Posterior vena cava (tissue), 2 donors: ENCODE measurements at regions of chr7 and their contacts with region 1.

Region 1: DNA sequence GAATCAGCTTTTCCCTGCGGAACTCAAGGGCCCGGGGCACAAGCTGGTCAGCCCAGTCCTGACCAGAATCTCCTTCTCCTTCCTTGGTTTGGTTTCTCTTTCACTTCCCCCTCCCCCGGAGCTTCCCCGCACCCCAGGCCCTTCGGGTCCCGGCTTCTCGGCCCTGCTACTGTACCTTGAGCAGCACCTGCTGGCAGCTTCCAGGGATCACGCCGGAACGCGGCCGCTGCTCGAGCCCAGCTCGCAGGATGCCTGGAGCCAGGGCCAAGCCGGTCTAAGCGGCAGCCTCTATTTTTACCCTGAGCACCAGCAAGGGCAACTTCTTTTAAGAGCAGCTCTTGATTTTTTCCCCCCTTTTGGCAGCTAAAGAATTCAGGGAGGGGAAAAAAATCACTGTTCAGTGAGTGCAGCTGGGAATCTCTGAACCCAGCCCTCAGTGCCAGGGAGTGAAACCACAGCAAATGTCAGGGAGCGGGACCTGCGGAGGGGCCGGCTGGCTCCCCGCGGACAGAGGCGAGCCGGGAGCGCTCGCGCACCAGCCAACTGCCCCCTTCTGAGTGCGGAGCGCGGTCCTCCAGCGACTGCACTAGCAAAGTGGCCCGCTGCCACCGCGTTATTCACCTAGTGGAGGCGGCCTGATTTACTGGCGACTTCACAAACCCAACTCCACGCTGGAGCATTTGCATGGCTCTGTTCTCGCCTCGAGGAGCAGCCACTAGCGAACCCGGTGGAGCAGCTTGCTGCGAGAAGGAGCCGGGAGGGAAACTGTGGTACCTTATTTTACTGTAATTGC is 2.4 kb upstream of the INHBA start:
- DNase-seq: peak; percentile 96

Region 2: DNA sequence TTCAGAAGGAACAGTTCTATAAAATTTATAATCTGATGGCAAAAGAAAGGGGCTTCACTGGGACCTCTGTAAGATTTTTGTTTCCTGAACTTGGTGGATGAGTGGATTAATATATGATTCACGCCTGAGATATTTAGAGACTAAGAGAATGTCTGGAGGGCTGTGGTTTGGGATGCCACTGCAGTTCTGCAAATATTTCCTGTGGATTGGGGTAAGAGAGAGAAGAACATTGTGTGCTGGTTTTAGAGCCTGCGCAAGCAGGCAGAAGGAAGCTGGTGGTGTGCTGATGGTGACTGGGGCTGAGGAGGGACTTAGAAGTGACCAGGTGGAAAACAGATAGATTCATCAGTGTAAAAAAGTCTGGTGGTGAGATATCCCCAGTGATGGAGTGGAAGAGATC is 1483.5 kb before region 1 on chr7:
- intact Hi-C with region 1: loop called in 1 of 2 experiments (anchors 10 kb)
- DNase-seq: no peak

Region 3: DNA sequence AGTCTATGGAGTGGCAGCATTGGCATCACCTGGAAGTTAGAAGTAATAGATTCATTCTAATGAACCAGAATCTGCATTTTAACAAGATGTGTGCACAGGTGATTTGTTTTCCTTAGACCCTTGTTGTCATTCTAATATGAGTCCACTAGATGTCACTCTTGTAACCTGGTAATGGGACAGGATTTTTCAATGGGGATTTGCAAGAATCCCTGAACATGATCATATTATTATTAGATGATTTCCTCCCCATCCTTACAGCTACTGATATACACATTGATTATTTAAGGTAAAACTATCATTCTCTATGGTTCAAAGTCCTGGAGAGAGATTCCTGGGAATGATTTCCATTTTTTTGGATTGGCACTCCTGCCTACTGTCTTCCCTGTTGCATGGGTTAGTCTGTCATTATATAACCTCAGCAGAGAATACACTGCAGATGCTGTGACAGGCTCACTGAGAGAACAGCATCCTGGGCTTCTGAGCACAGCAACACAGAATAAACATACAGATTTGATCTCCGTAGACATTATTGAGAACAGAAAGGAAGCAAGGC is 1375.6 kb before region 1 on chr7:
- intact Hi-C with region 1: loop called in 1 of 2 experiments (anchors 10 kb)
- DNase-seq: no peak

Region 4: DNA sequence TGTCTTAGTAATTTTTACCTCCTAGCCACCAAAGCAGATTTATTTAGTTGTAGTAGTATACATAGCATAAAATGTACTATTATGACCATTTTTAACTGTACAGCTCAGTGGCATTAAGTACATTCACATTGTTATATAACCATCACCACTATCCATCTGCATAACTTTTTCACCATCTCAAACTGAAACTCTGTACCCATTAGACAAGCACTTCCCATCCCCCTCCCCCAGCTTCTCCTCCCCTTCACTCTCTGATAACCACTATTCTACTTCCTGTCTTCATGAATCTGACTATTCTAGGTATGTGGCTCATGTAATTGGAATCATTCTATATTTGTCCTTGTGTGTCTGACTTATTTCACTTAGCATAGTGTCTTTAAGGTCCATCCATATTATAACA is 1298.8 kb after region 1 on chr7:
- intact Hi-C with region 1: no loop called
- DNase-seq: no peak